CD8-positive, alpha-beta T cell (primary cell): ENCODE measurements at regions of chr22 and their contacts with region 1.

Region 1: DNA sequence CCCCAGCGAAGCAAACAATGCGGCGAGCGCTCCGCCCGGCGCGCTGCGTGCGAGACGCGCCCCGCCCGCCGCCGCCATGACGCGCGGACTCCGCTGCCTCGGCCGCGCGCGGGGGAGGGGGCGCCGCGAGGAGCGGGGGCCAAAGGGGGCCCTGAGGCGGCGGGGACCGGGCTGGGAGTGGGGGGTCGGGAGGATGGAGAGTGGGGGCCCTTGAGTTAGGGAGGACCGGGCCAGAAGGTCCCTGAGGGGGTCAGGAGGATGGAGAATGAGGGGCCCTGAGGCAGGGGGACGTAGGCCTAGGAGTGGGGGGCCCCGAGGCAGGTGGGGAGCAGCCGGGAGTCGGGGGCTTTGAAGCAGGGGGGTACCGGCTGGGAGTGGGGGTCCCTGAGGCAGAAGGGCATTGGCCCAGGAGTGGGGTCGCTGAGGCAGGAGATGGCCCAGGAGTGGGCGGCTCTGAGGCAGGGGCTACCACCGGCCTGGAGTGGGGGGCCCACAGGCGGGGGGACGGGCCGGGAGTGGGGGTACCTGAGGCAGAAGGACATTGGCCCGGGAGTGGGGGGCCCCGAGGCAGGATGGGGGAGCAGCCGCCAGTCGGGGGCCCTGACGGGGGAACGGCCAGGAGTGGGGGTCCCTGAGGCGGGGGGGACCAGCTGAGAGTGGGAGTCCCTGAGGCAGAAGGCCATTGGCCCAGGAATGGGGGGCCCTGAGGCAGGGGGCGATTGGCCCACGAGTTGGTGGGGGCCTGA is at the start of gene BRD1:
- DNase-seq: peak in 8 of 9 experiments; percentile 42 to 84 (median 59)
- ATAC-seq: peak; percentile 52
- H3K4me3 ChIP-seq: peak within 1 kb of the TSS; percentile 62 to 71
- H3K4me3 Mint-ChIP-seq: peak within 1 kb of the TSS; percentile 96
- H3K27ac ChIP-seq: peak within 1 kb of the TSS; percentile 55 to 78
- H3K27ac Mint-ChIP-seq: peak within 1 kb of the TSS; percentile 97
- H3K4me1 ChIP-seq: peaks cover 38% of the 10 kb centered on the region
- H3K4me1 Mint-ChIP-seq: peaks cover 37% of the 10 kb centered on the region
- H3K27me3 ChIP-seq: no peaks in the 10 kb centered on the region
- H3K27me3 Mint-ChIP-seq: no peaks in the 10 kb centered on the region
- CTCF ChIP-seq: no peak
- total RNA-seq, gene BRD1: 159 to 167 TPM

Region 2: GRCh38 chr22:49789289-49790141 is 38.5 kb before region 1 on chr22:
- CTCF ChIA-PET with region 1: no interaction called
- POLR2A ChIA-PET with region 1: no interaction called
- intact Hi-C with region 1: loop called in 1 of 2 experiments (anchors 5 kb)
- DNase-seq: peak; percentile 16 to 73 (median 50)
- ATAC-seq: peak; percentile 83
- H3K4me3 ChIP-seq: peak overlapping the region; percentile 12 to 54
- H3K4me3 Mint-ChIP-seq: peak overlapping the region; percentile 76
- H3K27ac ChIP-seq: peak overlapping the region; percentile 49
- H3K27ac Mint-ChIP-seq: peak overlapping the region; percentile 90
- H3K4me1 ChIP-seq: peaks cover 28% of the 10 kb centered on the region
- H3K4me1 Mint-ChIP-seq: peaks cover 48% of the 10 kb centered on the region
- H3K27me3 ChIP-seq: no peaks in the 10 kb centered on the region
- H3K27me3 Mint-ChIP-seq: no peaks in the 10 kb centered on the region
- CTCF ChIP-seq: no peak

Region 3: GRCh38 chr22:49807780-49808708 is 20.0 kb before region 1 on chr22:
- CTCF ChIA-PET with region 1: no interaction called
- POLR2A ChIA-PET with region 1: no interaction called
- intact Hi-C with region 1: loop called in 1 of 2 experiments (anchors 2 kb)
- DNase-seq: peak in 8 of 9 experiments; percentile 30 to 84 (median 61)
- ATAC-seq: peak; percentile 82
- H3K4me3 ChIP-seq: no peak overlapping the region
- H3K4me3 Mint-ChIP-seq: peak overlapping the region; percentile 49
- H3K27ac ChIP-seq: peak overlapping the region; percentile 19 to 44
- H3K27ac Mint-ChIP-seq: peak overlapping the region; percentile 94
- H3K4me1 ChIP-seq: peaks cover 69% of the 10 kb centered on the region
- H3K4me1 Mint-ChIP-seq: peaks cover 77% of the 10 kb centered on the region
- H3K27me3 ChIP-seq: no peaks in the 10 kb centered on the region
- H3K27me3 Mint-ChIP-seq: no peaks in the 10 kb centered on the region
- CTCF ChIP-seq: no peak

Region 4: GRCh38 chr22:49838771-49839717 is 11.0 kb after region 1 on chr22:
- CTCF ChIA-PET with region 1: interaction called, 3 read pairs
- POLR2A ChIA-PET with region 1: interaction called, 9 read pairs
- intact Hi-C with region 1: loop called (anchors 1 kb)
- DNase-seq: peak; percentile 75 to 98 (median 87)
- ATAC-seq: peak; percentile 94
- H3K4me3 ChIP-seq: peak overlapping the region; percentile 39 to 65
- H3K4me3 Mint-ChIP-seq: peak overlapping the region; percentile 66
- H3K27ac ChIP-seq: peak overlapping the region; percentile 84 to 86
- H3K27ac Mint-ChIP-seq: peak overlapping the region; percentile 97
- H3K4me1 ChIP-seq: peaks cover 17% of the 10 kb centered on the region
- H3K4me1 Mint-ChIP-seq: peaks cover 23% of the 10 kb centered on the region
- H3K27me3 ChIP-seq: no peaks in the 10 kb centered on the region
- H3K27me3 Mint-ChIP-seq: no peaks in the 10 kb centered on the region
- CTCF ChIP-seq: no peak

Region 5: DNA sequence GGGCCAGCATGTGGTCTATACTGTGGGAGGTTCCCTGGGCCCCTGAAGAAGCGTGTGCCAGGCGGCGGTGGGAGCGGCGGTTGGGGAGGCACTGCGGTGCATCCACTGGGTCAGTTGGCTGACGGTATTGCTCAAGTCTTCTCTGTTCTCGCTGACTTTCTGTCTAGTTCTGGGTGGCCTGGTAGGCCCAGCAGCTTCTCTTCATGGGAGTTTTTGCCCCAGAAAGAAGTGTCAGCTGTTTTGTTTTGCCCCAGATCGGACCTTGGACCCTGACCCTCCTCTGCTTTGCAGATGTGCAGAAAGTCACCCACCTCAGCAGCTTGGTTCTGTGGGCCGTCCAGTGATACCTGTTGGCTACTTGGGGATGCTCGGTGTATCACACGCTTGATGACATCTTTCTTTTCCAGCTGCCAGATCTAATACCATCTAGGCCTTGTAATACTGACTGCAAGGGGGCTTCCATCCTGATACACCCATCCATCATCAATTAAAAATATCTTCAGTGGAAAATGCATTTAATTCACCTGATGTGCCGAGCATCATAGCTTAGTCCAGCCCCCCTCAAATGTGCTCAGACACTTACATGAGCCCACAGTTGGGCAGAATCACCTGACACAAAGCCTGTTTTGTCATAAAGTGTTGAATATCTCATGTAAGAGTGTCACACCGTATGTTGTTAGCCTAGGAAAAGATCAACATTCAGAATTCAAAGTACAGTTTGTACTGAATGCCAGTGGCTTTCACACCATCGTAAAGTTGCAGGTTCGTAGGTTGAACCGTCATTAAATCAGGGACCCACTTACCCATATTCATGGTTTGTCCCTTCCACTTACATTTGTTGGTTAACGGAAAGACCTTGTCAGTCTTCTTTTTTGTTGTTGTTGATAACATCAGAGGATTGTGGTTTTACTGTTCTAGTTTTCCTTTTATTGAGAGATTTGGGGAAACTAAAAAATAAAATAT is 39.6 kb after region 1 on chr22:
- CTCF ChIA-PET with region 1: no interaction called
- POLR2A ChIA-PET with region 1: interaction called, 3 read pairs
- intact Hi-C with region 1: loop called in 1 of 2 experiments (anchors 5 kb)
- DNase-seq: peak in 2 of 9 experiments; percentile 58 to 73
- ATAC-seq: peak; percentile 65
- H3K4me3 ChIP-seq: no peak overlapping the region
- H3K4me3 Mint-ChIP-seq: peak overlapping the region; percentile 65
- H3K27ac ChIP-seq: peak overlapping the region in 1 of 2 experiments; percentile 40
- H3K27ac Mint-ChIP-seq: peak overlapping the region; percentile 80
- H3K4me1 ChIP-seq: peaks cover 34% of the 10 kb centered on the region
- H3K4me1 Mint-ChIP-seq: peaks cover 68% of the 10 kb centered on the region
- H3K27me3 ChIP-seq: no peaks in the 10 kb centered on the region
- H3K27me3 Mint-ChIP-seq: no peaks in the 10 kb centered on the region
- CTCF ChIP-seq: no peak

Region 6: DNA sequence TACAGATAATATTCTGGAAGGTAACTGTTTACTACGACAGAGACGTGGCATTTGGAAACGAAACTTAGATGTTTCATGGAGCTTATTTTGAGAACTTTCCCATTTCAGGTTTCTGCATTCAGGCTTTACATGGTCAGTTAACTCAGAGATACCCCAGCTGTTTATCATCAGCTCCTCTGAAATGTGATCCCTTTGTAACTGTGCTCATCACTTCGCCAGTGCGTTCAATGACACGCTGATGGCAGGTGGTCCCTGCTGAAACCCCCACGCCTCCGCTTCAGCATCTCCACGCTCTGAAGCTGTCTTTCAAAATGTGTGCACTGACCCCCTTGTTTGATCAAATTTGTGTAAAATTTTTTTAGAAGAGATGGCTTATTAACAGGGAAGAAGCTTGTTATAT is 59.7 kb after region 1 on chr22:
- CTCF ChIA-PET with region 1: no interaction called
- POLR2A ChIA-PET with region 1: no interaction called
- intact Hi-C with region 1: no loop called
- DNase-seq: no peak
- ATAC-seq: no peak
- H3K4me3 ChIP-seq: no peak overlapping the region
- H3K4me3 Mint-ChIP-seq: no peak overlapping the region
- H3K27ac ChIP-seq: no peak overlapping the region
- H3K27ac Mint-ChIP-seq: no peak overlapping the region
- H3K4me1 ChIP-seq: no peaks in the 10 kb centered on the region
- H3K4me1 Mint-ChIP-seq: peaks cover 9% of the 10 kb centered on the region
- H3K27me3 ChIP-seq: no peaks in the 10 kb centered on the region
- H3K27me3 Mint-ChIP-seq: no peaks in the 10 kb centered on the region
- CTCF ChIP-seq: no peak